Mammary epithelial cell (primary cell): ENCODE measurements at regions of chr7 and their contacts with region 1.

Region 1: GRCh38 chr7:140003913-140004382 is 58.8 kb downstream of the PARP12 start:
- DNase-seq: peak; percentile 49
- H3K4me3 ChIP-seq: no peak overlapping the region
- H3K27ac ChIP-seq: no peak overlapping the region
- H3K4me1 ChIP-seq: peaks cover 5% of the 10 kb centered on the region
- H3K27me3 ChIP-seq: no peaks in the 10 kb centered on the region
- CTCF ChIP-seq: peak; percentile 50 to 65

Region 2: DNA sequence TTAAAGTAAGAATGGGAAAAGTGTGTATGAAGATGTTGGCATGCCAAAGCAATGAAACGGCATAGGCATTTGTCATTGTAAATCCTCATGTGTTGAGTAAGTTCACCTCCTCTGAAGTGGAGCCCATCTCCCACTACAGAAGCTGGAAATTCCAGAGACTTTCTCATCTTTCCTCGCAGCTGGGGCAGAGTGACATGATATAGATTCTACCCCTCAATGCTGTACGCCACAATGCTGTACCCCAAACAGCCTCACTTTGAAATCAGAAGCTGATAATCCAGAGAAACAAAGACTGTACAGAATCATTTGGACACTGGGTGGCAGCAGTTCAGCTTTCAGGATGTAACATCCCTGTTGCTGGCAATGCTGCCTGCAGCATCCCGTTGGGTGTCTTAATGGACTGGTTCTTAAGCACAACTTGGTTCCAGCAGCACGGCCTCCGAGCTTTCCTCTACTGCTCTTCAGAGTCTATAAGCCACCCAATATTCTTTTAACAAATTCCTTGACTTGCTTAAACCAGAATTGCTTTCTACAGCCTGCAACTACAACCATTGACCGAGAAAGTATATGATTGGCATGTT is 986.9 kb before region 1 on chr7:
- CTCF ChIA-PET with region 1: no interaction called
- dilution Hi-C with region 1: no loop called
- in situ Hi-C with region 1: no loop called
- intact Hi-C with region 1: loop called (anchors 5 kb)
- DNase-seq: peak; percentile 50
- H3K4me3 ChIP-seq: no peak overlapping the region
- H3K27ac ChIP-seq: no peak overlapping the region
- H3K4me1 ChIP-seq: no peaks in the 10 kb centered on the region
- H3K27me3 ChIP-seq: no peaks in the 10 kb centered on the region
- CTCF ChIP-seq: peak; percentile 54 to 79

Region 3: DNA sequence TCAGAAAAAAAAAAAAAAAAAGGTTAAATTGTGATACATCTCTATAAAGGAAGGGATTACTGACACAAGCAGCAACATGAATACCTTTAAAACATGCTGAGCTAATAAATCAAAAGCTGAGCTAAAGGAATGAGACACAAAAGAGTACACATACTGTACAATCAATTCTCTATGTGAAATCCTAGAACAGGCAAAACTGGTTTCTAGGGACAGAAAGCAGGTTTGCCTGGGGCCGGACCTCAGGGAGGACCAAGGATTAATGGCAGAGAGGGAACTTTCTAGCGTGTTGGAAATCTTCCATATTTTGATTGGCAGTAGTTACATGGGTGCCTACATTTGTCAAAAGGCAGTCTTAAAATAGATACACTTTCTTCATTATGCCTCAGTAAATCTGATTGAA is 572.9 kb before region 1 on chr7:
- CTCF ChIA-PET with region 1: no interaction called
- dilution Hi-C with region 1: no loop called
- in situ Hi-C with region 1: no loop called
- intact Hi-C with region 1: loop called (anchors 1 kb)
- DNase-seq: peak; percentile 89
- H3K4me3 ChIP-seq: no peak overlapping the region
- H3K27ac ChIP-seq: no peak overlapping the region
- H3K4me1 ChIP-seq: peaks cover 14% of the 10 kb centered on the region
- H3K27me3 ChIP-seq: no peaks in the 10 kb centered on the region
- CTCF ChIP-seq: no peak

Region 4: GRCh38 chr7:139505563-139505962 is 498.4 kb before region 1 on chr7:
- CTCF ChIA-PET with region 1: no interaction called
- dilution Hi-C with region 1: no loop called
- in situ Hi-C with region 1: no loop called
- intact Hi-C with region 1: loop called (anchors 1 kb)
- DNase-seq: no peak
- H3K4me3 ChIP-seq: no peak overlapping the region
- H3K27ac ChIP-seq: no peak overlapping the region
- H3K4me1 ChIP-seq: no peaks in the 10 kb centered on the region
- H3K27me3 ChIP-seq: no peaks in the 10 kb centered on the region
- CTCF ChIP-seq: peak; percentile 19 to 29

Region 5: DNA sequence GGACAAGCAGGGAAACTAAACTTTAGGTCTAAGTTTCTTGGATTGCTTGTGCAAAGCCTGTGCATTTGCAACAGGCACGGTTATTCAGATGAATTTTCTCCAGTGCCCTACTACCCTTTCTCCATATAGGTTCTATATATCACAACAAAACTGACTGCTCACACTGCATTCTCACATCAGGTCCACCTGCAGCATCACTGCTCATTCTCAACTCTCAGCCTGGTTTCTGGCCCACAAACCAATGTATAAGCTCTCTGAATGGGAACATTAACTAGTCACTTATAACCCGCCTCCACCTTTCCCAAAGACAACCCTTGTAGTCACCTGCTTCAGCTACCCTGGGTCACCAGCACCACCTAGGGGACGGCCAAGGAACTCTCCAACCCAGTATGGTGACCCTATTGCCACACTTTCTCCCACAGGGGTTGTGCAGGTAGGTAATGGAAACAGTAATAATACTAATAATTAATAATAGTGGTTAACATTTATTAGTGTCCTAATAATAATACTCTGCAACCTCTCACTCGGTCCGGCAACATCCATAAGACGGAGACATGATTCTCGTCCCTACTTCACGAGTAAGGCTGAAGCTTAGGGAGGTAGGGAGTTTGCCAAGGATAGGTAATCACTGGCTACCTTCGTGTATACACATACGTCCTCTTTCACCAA is 383.1 kb before region 1 on chr7:
- CTCF ChIA-PET with region 1: no interaction called
- dilution Hi-C with region 1: loop called (anchors 10 kb)
- in situ Hi-C with region 1: no loop called
- intact Hi-C with region 1: loop called (anchors 1 kb)
- DNase-seq: peak; percentile 40
- H3K4me3 ChIP-seq: no peak overlapping the region
- H3K27ac ChIP-seq: no peak overlapping the region
- H3K4me1 ChIP-seq: no peaks in the 10 kb centered on the region
- H3K27me3 ChIP-seq: no peaks in the 10 kb centered on the region
- CTCF ChIP-seq: peak; percentile 78 to 81

Region 6: DNA sequence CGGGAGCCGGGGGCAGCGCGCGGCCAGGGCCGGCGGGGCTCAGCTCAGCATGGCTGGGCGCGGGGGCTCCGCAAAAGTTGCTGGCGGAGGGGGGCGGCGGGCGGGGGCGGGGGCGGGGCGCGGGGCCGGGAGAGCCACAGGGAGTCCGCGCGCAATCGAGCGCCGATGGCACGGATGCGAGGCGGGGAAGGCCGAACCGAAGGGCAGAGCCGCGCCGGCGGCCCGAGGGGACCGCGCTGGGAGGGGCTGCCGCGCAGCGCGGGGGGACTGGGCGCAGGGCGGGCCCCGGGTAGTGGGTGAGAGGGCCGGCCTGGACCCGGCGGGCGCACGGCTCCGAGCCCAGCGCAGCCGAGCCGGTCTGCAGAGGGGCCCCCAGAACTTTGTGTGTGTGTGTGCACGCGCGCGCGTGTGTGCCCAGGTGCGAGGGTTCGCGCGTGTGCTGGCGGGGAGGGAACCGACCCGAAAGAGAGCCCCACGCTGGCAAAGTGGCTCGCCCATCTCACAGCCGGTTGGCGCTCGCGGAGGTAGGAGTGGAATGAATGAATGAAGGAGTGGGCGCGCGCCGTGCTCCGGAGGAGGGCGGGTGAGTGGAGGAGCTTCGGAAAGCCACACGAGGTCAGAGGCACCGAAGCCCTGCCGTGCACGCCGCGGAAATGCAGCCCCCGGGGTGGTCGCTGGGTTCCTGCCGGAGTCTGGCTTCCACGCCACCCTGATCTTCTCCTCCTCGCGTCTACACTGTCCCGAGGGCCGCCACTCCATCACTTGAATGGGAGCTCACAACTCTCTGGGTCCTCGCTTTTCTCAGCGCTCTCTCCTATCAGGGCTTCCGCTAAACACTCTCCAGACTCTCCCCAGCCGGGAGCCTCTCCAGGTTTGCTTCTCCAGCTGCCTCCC is 225.8 kb before region 1 on chr7 and contains the start of gene HIPK2:
- CTCF ChIA-PET with region 1: no interaction called
- dilution Hi-C with region 1: no loop called
- in situ Hi-C with region 1: loop called in 1 of 2 experiments (anchors 25 kb)
- intact Hi-C with region 1: loop called (anchors 1 kb)
- DNase-seq: peak; percentile 55
- H3K4me3 ChIP-seq: peak within 1 kb of the TSS; percentile 67 to 75 (median 71)
- H3K27ac ChIP-seq: peak within 1 kb of the TSS; percentile 78
- H3K4me1 ChIP-seq: peaks cover 33% of the 10 kb centered on the region
- H3K27me3 ChIP-seq: no peaks in the 10 kb centered on the region
- CTCF ChIP-seq: no peak
- total RNA-seq, gene HIPK2: 31.0 to 58.3 TPM

Region 7: DNA sequence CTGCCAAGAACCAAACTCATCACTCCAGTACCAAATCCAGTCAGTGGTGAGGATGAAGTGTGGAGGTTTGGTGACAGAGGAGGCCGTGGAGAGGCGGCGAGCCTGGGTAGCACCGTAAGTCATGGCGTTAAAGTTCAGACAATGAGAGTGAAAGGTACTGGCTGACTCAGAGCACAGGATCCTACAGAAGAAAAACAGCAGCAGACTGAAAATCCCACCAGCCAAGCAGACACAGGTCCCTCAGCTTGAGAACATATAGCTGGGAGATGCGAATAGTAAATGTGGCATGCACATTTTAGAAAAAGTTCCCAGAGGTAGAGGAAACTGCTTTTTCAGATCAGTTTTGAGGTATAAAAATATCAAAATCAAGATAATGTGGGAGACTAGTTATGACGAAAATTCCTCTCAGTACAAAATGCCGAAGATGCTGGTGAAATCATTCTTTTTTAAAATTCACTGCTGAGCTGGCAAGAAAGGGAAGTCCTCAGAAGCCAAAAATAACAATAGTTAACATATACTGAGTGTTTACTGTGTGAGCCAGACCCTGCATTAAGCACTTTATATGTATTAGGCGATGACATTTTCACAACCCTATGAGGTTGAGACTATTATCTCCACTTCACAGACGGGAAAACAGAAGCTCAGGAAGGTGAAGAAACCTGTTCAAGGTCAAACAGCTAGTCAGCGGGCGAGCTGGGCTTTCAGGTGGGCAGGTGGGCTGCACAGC is 37.9 kb after region 1 on chr7:
- CTCF ChIA-PET with region 1: no interaction called
- dilution Hi-C with region 1: no loop called
- in situ Hi-C with region 1: no loop called
- intact Hi-C with region 1: no loop called
- DNase-seq: no peak
- H3K4me3 ChIP-seq: no peak overlapping the region
- H3K27ac ChIP-seq: no peak overlapping the region
- H3K4me1 ChIP-seq: no peaks in the 10 kb centered on the region
- H3K27me3 ChIP-seq: no peaks in the 10 kb centered on the region
- CTCF ChIP-seq: no peak

Region 8: GRCh38 chr7:140121326-140121725 is 117.4 kb after region 1 on chr7:
- CTCF ChIA-PET with region 1: no interaction called
- dilution Hi-C with region 1: no loop called
- in situ Hi-C with region 1: no loop called
- intact Hi-C with region 1: no loop called
- DNase-seq: no peak
- H3K4me3 ChIP-seq: no peak overlapping the region
- H3K27ac ChIP-seq: no peak overlapping the region
- H3K4me1 ChIP-seq: no peaks in the 10 kb centered on the region
- H3K27me3 ChIP-seq: no peaks in the 10 kb centered on the region
- CTCF ChIP-seq: no peak

Region 9: GRCh38 chr7:140304191-140304799 is 300.3 kb after region 1 on chr7:
- CTCF ChIA-PET with region 1: no interaction called
- dilution Hi-C with region 1: no loop called
- in situ Hi-C with region 1: no loop called
- intact Hi-C with region 1: loop called (anchors 1 kb)
- DNase-seq: peak; percentile 2
- H3K4me3 ChIP-seq: no peak overlapping the region
- H3K27ac ChIP-seq: no peak overlapping the region
- H3K4me1 ChIP-seq: no peaks in the 10 kb centered on the region
- H3K27me3 ChIP-seq: no peaks in the 10 kb centered on the region
- CTCF ChIP-seq: peak in 1 of 2 donors; percentile 31